Dorsolateral prefrontal cortex (tissue), 120 donors: ENCODE measurements at regions of chr10 and their contacts with region 1.

Region 1: DNA sequence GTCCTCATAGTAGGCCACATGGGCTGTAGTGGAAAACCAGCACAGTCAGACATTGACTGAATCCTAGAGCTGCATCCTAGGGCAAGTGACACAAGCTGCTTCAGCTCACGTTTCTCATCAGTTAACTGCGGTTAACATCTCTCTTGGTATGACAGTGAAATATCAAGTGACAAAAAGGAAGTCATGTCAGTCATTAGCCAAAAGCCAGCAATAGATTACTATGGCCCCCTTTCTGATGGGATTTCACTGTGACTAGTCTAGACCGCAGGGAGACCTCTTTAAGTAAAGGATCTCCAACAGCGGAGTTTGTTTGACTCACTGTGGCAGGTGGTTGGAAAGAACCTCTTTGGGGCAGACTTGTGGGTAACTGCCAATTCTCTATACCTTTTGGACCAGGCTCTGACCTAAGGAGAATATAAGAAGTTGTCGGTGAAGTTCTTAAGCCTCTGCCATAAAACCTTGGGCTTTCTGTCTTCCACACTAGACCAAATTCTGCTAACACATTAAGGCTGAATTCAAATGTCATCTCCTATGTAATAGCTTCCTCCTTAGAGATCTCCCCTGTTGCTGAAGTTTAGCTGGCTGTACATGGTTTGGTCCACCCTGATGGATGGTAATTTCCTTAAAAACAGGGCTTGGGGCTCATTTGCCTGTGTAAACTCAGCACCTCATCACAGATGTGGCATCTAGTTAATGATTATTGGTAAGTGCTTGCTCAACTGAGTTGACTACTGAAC is 115.3 kb downstream of the SGMS1 start:
- DNase-seq: no peak
- H3K4me3 ChIP-seq: no peak overlapping the region
- H3K27ac ChIP-seq: peak overlapping the region; percentile 79 to 100 (median 97)
- H3K27me3 ChIP-seq: no peaks in the 10 kb centered on the region
- CTCF ChIP-seq: no peak

Region 2: DNA sequence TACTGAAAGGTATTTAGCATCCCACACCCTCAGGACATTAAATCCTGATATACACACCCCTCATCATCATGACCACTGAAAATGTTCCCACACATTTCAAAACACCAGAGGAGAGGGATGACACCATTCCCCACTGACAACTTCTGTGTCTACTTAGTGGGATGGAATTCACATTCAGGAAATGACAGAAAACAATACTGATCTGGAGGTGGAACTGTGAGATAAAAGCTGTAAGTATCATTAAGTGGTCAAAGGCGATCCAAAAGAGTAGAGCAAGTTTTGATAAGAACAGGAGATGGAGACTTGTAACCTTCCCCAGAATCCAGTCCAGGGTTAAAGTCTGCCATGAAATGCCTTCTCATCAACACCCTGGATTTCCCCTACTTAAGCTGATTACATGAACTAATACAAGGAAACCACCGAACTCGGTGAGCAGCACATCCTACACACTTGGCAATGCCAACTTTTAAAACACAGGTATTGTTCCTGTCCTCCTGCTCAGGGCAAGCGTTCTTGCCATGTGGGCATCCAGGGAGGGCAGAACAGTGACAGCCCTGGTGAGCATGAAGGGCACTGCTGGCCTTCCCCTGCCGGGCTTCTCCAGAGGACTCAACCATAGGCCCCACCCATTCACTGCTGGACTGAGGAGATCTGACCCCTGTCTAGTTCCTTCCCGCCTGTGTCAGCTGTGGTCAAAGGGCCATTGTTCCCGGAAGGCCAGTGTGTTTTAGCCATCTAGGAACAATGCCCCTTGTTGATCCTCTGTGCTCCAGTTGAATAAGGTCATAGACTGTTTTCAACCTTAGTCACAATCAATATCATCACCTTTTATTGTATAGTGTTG is 30.3 kb after region 1 on chr10:
- intact Hi-C with region 1: loop called in 1 of 2 experiments (anchors 2 kb)
- DNase-seq: peak; percentile 14 to 85 (median 80)
- H3K4me3 ChIP-seq: peak overlapping the region in 1 of 59 donors; percentile 12
- H3K27ac ChIP-seq: peak overlapping the region; percentile 4 to 96 (median 87)
- H3K27me3 ChIP-seq: no peaks in the 10 kb centered on the region
- CTCF ChIP-seq: peak in 5 of 56 donors; percentile 8 to 13 (median 11)

Region 3: GRCh38 chr10:50552771-50553535 is 44.5 kb after region 1 on chr10:
- intact Hi-C with region 1: loop called in 1 of 2 experiments (anchors 5 kb)
- DNase-seq: no peak
- H3K4me3 ChIP-seq: peak overlapping the region in 4 of 59 donors; percentile 1 to 37 (median 9)
- H3K27ac ChIP-seq: peak overlapping the region in 56 of 59 donors; percentile 1 to 86 (median 71)
- H3K27me3 ChIP-seq: no peaks in the 10 kb centered on the region
- CTCF ChIP-seq: peak in 42 of 56 donors; percentile 10 to 66 (median 40)